PC-9 (cell line): ENCODE measurements at regions of chr12 and their contacts with region 1.

Region 1: DNA sequence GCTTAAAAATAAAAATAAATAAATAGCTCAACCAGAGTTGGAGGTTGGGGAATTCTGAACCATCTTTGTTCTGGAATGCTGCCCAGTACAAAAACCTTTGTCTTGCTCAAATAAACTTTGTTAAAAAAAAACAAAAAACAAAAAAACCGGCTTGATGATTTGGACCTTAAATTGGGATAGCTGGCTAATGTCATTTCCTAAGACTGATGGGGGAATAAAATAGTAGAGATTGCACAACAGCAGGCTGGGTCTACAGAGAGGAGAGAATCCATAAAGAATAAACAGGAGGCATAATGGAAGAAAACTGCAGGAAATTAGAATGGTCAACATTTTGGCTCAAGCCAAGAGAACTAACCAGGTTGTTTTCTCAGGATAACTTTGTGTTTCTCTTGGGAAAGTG is 370.9 kb downstream of the AEBP2 start:
- DNase-seq: no peak
- H3K4me3 ChIP-seq: no peak overlapping the region
- H3K27ac ChIP-seq: no peak overlapping the region
- H3K4me1 ChIP-seq: no peaks in the 10 kb centered on the region
- H3K27me3 ChIP-seq: no peaks in the 10 kb centered on the region
- CTCF ChIP-seq: no peak

Region 2: DNA sequence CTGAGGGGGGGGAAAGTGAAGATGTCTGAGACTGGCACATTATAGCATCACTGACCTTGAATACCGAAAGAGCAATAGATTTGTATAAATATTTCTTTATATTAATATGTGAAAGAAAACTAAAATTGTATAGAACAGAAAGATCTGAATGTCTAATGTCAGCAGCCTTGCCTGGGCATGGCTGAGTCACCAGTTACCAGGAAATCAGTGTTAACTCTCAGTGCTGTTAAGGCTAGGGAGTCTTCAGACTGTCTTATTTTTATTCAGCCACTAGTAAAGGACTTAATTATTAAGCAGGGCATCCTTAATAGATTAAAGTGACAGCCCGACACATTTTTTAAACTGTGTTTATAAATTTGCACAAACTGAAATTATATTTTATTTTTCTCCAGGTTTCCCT is 493.8 kb before region 1 on chr12:
- CTCF ChIA-PET with region 1: no interaction called
- POLR2A ChIA-PET with region 1: interaction called, 20 read pairs
- intact Hi-C with region 1: no loop called
- DNase-seq: no peak
- H3K4me3 ChIP-seq: no peak overlapping the region
- H3K27ac ChIP-seq: no peak overlapping the region
- H3K4me1 ChIP-seq: no peaks in the 10 kb centered on the region
- H3K27me3 ChIP-seq: no peaks in the 10 kb centered on the region
- CTCF ChIP-seq: no peak